Gastrocnemius medialis (tissue), 4 donors: ENCODE measurements at regions of chr1 and their contacts with region 1.

Region 1: GRCh38 chr1:109548321-109549267 is at the start of gene GNAI3:
- DNase-seq: peak; percentile 96
- ATAC-seq: peak; percentile 96 to 97
- H3K4me3 ChIP-seq: peak within 1 kb of the TSS; percentile 82 to 98 (median 93)
- H3K27ac ChIP-seq: peak within 1 kb of the TSS; percentile 91 to 99 (median 96)
- H3K4me1 ChIP-seq: peaks cover 33 to 34% of the 10 kb centered on the region in 2 donors
- H3K27me3 ChIP-seq: no peaks in the 10 kb centered on the region
- CTCF ChIP-seq: peak in 1 of 5 experiments; percentile 27
- POLR2A ChIP-seq: peak; percentile 97
- total RNA-seq, gene GNAI3: 0.90 to 2.5 (median 1.8) TPM

Region 2: GRCh38 chr1:109282952-109283747 is 265.4 kb before region 1 on chr1 and contains the start of gene PSRC1:
- in situ Hi-C with region 1: loop called in 1 of 4 experiments (anchors 25 kb)
- intact Hi-C with region 1: no loop called
- DNase-seq: peak; percentile 95 to 96
- ATAC-seq: peak; percentile 94 to 98
- H3K4me3 ChIP-seq: peak within 1 kb of the TSS; percentile 64 to 72 (median 64)
- H3K27ac ChIP-seq: peak within 1 kb of the TSS; percentile 79 to 93 (median 86)
- H3K4me1 ChIP-seq: peaks cover 13 to 19% of the 10 kb centered on the region in 2 donors
- H3K27me3 ChIP-seq: no peaks in the 10 kb centered on the region
- CTCF ChIP-seq: peak in 4 of 5 experiments; percentile 43 to 71 (median 59)
- POLR2A ChIP-seq: peak; percentile 66 to 68
- total RNA-seq, gene PSRC1: 0.19 to 2.3 (median 0.84) TPM in 3 of 4 donors, not detected in the other

Region 3: GRCh38 chr1:109516872-109517271 is 31.7 kb before region 1 on chr1:
- in situ Hi-C with region 1: no loop called
- intact Hi-C with region 1: no loop called
- DNase-seq: no peak
- ATAC-seq: no peak
- H3K4me3 ChIP-seq: no peak overlapping the region
- H3K27ac ChIP-seq: no peak overlapping the region
- H3K4me1 ChIP-seq: no peaks in the 10 kb centered on the region
- H3K27me3 ChIP-seq: no peaks in the 10 kb centered on the region
- CTCF ChIP-seq: no peak
- POLR2A ChIP-seq: no peak

Region 4: DNA sequence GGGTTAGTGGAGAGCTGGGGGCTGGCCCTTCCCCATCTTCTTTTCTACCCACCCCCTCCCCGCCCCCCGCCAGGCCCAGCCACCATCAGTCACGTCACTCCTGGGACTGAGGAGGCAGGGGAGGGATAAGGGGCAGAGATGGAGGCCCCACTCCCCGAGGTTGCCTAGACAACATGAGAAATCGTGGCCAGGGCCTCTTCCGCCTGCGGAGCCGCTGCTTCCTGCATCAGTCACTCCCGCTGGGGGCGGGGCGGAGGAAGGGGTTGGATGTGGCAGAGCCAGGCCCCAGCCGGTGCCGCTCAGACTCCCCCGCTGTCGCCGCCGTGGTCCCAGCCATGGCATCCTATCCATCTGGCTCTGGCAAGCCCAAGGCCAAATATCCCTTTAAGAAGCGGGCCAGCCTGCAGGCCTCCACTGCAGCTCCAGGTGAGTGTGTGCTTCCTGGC is 72.3 kb after region 1 on chr1:
- in situ Hi-C with region 1: loop called (anchors 5 to 10 kb)
- intact Hi-C with region 1: loop called (anchors 2 kb)
- DNase-seq: peak; percentile 69 to 75
- ATAC-seq: peak; percentile 48 to 51
- H3K4me3 ChIP-seq: peak overlapping the region; percentile 64 to 87 (median 66)
- H3K27ac ChIP-seq: peak overlapping the region; percentile 62 to 73 (median 71)
- H3K4me1 ChIP-seq: peaks cover 4 to 24% of the 10 kb centered on the region in 2 donors
- H3K27me3 ChIP-seq: peaks cover 0 to 4% (median 0%) of the 10 kb centered on the region in 3 donors
- CTCF ChIP-seq: no peak
- POLR2A ChIP-seq: no peak

Region 5: DNA sequence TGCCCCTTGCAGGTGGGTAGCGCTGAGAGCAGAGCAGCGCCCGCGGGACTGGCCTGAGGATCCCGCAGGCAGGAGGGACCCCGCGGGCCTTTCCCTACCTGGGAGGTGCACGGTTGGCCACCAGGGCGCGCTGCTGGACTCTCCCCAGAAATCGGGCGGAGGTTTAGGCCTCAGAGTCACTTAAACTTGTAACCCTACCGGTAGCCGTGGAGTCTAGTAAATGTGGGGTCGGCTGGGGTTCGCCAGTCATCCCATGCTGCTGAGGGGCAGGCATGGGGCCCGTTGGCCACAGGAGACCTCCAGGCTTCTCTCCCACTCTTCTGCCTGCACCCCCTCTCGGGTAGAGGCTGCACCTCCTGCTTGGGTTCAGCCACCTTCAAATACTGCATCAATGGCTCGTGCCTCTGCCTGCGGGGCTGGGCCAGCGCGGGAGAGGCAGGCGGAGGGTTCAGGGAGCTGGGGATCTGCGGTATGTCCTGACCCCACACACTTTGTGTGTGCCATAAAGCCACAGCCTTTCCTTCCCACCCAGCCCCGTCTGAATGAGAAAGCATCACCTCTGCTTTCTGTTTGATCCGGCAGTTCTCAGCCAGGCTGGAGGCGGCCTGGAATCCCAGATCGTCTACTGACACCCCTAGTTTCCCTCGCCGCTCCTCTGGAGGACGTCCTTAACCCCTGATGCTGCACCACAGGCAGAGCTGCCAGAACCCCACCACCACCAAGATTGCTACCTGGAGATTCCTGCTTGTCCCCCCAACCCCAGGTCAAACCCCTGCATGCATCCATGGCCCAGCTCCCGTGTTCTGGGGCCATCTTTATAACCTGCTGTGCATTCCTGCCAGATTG is 95.0 kb after region 1 on chr1:
- in situ Hi-C with region 1: no loop called
- intact Hi-C with region 1: loop called (anchors 5 kb)
- DNase-seq: peak; percentile 60 to 69
- ATAC-seq: peak; percentile 92 to 95
- H3K4me3 ChIP-seq: peak overlapping the region in 1 of 4 donors; percentile 14
- H3K27ac ChIP-seq: no peak overlapping the region
- H3K4me1 ChIP-seq: peaks cover 0 to 6% of the 10 kb centered on the region in 2 donors
- H3K27me3 ChIP-seq: no peaks in the 10 kb centered on the region
- CTCF ChIP-seq: peak; percentile 73 to 92 (median 85)
- POLR2A ChIP-seq: no peak

Region 6: GRCh38 chr1:109655601-109656519 is 107.3 kb after region 1 on chr1 and contains the start of gene GSTM4:
- in situ Hi-C with region 1: loop called in 3 of 4 experiments (anchors 10 kb)
- intact Hi-C with region 1: no loop called
- DNase-seq: peak; percentile 68 to 83
- ATAC-seq: peak; percentile 91 to 94
- H3K4me3 ChIP-seq: peak within 1 kb of the TSS; percentile 54 to 93 (median 84)
- H3K27ac ChIP-seq: peak within 1 kb of the TSS; percentile 86 to 95 (median 88)
- H3K4me1 ChIP-seq: peaks cover 14% of the 10 kb centered on the region in 2 donors
- H3K27me3 ChIP-seq: no peaks in the 10 kb centered on the region
- CTCF ChIP-seq: peak in 2 of 5 experiments; percentile 9 to 30
- POLR2A ChIP-seq: peak; percentile 28 to 47
- total RNA-seq, gene GSTM4: 18.1 to 28.9 (median 25.0) TPM

Region 7: GRCh38 chr1:109773146-109773899 is 224.7 kb after region 1 on chr1:
- in situ Hi-C with region 1: loop called (anchors 5 to 10 kb)
- intact Hi-C with region 1: loop called (anchors 1 kb)
- DNase-seq: peak; percentile 82 to 87
- ATAC-seq: peak; percentile 88 to 93
- H3K4me3 ChIP-seq: no peak overlapping the region
- H3K27ac ChIP-seq: peak overlapping the region in 1 of 4 donors; percentile 8
- H3K4me1 ChIP-seq: peaks cover 0 to 3% of the 10 kb centered on the region in 2 donors
- H3K27me3 ChIP-seq: no peaks in the 10 kb centered on the region
- CTCF ChIP-seq: peak; percentile 78 to 90 (median 85)
- POLR2A ChIP-seq: no peak